H1 (cell line): ENCODE measurements at regions of chr3 and their contacts with region 1.

Region 1: DNA sequence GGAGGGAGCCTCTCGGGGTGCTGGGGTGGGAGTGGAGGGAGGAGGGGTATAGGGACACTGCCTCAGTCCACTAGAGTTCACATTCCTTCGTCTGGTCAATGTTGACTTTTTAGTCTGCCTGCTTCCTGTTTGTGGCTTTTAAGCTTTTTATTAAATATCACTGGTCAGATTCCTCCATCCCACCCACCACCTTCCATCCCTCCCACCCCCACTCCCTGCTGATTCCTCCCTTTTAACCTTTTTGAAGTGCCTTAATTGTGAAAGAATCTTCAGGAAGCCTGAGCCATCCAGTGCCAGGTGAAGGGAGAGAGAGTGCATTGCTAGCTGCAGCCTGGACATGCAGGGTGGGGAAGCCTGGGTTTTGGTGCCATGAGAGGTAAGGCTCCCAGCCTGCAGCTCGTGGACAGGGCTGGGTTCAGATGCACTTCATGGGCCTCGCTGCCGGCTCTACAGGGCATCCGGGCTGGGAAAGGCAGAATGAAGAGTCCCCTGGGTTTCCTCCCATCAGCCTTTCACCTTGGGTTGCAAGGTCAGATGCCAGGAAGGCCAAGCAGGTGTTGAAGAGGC is 105.9 kb downstream of the DNAJB8 start:
- DNase-seq: no peak
- H3K4me3 ChIP-seq: no peak overlapping the region
- H3K27ac ChIP-seq: no peak overlapping the region
- H3K4me1 ChIP-seq: no peaks in the 10 kb centered on the region
- H3K27me3 ChIP-seq: no peaks in the 10 kb centered on the region
- CTCF ChIP-seq: no peak
- EP300 ChIP-seq: no peak
- POLR2A ChIP-seq: no peak
- RAD21 ChIP-seq: no peak

Region 2: GRCh38 chr3:128217702-128218547 is 142.9 kb before region 1 on chr3:
- CTCF ChIA-PET with region 1: no interaction called
- POLR2A ChIA-PET with region 1: no interaction called
- DNase-seq: no peak
- H3K4me3 ChIP-seq: no peak overlapping the region
- H3K27ac ChIP-seq: no peak overlapping the region
- H3K4me1 ChIP-seq: peaks cover 2 to 5% (median 4%) of the 10 kb centered on the region in 4 experiments; a peak in 3 of 7 replicates
- H3K27me3 ChIP-seq: no peaks in the 10 kb centered on the region; a peak in 1 of 7 replicates
- CTCF ChIP-seq: no peak
- EP300 ChIP-seq: no peak
- POLR2A ChIP-seq: no peak
- RAD21 ChIP-seq: no peak

Region 3: DNA sequence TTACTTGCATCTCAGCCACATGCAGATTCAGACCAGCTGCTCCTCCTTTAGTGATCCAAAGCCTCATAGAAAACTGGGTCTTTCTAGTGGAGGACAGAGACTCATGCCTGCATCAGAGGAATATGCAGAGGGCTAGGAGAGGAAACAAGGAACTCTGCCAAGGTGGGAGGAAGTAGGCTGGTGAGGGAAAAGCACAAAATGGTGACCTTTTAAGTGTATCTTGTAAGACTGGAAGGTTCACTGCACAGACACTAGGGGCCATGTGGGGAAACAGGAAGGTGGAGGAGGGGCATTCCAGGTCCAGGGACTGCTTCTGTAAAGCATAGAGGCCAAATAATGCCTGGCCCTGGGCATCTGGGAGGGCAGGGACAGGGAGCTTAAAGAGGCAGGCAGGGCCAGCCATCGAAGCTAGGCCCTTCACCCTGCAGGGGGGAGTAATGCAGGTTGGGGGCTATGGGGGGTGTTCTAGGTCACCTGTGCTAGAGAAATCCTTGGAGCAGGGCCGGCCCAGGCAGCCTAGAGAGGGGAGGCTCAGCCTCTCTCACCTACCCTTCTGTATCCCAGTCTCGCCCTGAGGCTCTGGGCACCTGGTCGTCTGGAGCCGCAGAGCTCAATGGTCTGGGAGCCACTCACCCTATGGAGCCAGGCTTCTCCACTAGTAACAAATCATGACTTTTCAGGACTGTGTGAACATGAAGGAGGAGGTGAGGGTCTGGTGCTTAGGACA is 11.8 kb before region 1 on chr3:
- CTCF ChIA-PET with region 1: interaction called, 31 read pairs
- POLR2A ChIA-PET with region 1: interaction called, 3 read pairs
- DNase-seq: no peak
- H3K4me3 ChIP-seq: no peak overlapping the region
- H3K27ac ChIP-seq: peak overlapping the region; percentile 22; the same call in 1 of the 2 replicates
- H3K4me1 ChIP-seq: peaks cover 5 to 10% (median 9%) of the 10 kb centered on the region in 4 experiments
- H3K27me3 ChIP-seq: no peaks in the 10 kb centered on the region
- CTCF ChIP-seq: no peak
- EP300 ChIP-seq: no peak
- POLR2A ChIP-seq: no peak
- RAD21 ChIP-seq: no peak

Region 4: DNA sequence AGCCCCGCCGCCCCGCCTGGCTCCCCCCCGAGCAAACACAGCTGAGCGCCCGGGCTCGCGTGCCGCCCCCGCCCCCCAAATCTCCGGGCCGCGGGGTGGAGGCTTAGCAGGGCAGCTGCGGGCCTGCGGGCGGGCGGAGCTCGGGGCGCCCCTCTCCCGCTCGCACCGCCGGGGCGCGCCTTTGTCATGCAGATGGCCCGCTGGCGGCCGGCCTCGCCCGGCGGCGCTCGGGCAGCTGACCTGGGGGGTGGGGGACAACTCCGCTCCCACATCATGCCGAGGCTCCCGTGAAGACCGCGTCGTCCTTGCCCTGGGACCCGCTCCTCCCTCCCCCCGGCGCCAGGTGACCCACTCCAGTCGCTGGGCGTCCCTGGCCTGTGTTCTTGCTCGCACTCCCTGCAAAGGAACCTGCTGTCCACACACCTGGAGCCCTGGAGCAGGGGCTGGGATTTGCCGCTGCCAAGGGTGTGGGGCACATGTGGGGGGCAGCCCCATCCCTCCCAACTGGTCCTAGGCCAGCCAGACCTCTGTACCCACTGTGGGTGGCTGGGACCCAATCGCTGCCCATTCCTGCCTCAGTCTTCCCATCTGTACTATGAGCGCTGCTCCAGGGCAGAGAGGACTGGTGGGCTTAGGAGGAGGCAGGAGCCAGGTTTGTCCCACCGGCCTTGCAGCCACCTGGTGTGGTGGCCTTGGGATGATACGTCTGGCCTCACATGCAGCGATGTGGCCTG is 72.3 kb after region 1 on chr3:
- CTCF ChIA-PET with region 1: no interaction called
- POLR2A ChIA-PET with region 1: no interaction called
- DNase-seq: peak in 1 of 2 experiments; percentile 75
- H3K4me3 ChIP-seq: peak overlapping the region; percentile 18 to 62 (median 32); a peak in 6 of 8 replicates
- H3K27ac ChIP-seq: no peak overlapping the region
- H3K4me1 ChIP-seq: peaks cover 6 to 40% (median 31%) of the 10 kb centered on the region in 4 experiments
- H3K27me3 ChIP-seq: peaks cover 9 to 57% (median 48%) of the 10 kb centered on the region in 4 experiments
- CTCF ChIP-seq: no peak
- EP300 ChIP-seq: no peak
- POLR2A ChIP-seq: no peak
- RAD21 ChIP-seq: no peak